ENCODE measurements at regions of chr2 and their contacts with region 1.

Region 1: GRCh38 chr2:160429248-160430000 is 64.2 kb downstream of the RBMS1 start:
- DNase-seq: no peak
- H3K4me3 Mint-ChIP-seq: no peak overlapping the region
- H3K27ac Mint-ChIP-seq: peak overlapping the region; percentile 64
- H3K4me1 Mint-ChIP-seq: peaks cover 79% of the 10 kb centered on the region
- H3K27me3 Mint-ChIP-seq: no peaks in the 10 kb centered on the region

Region 2: GRCh38 chr2:160411167-160411566 is 18.3 kb before region 1 on chr2:
- CTCF ChIA-PET with region 1: interaction called, 21 read pairs
- DNase-seq: peak; percentile 53
- H3K4me3 Mint-ChIP-seq: peak overlapping the region; percentile 57
- H3K27ac Mint-ChIP-seq: peak overlapping the region; percentile 93
- H3K4me1 Mint-ChIP-seq: peaks cover 72% of the 10 kb centered on the region
- H3K27me3 Mint-ChIP-seq: no peaks in the 10 kb centered on the region

Region 3: DNA sequence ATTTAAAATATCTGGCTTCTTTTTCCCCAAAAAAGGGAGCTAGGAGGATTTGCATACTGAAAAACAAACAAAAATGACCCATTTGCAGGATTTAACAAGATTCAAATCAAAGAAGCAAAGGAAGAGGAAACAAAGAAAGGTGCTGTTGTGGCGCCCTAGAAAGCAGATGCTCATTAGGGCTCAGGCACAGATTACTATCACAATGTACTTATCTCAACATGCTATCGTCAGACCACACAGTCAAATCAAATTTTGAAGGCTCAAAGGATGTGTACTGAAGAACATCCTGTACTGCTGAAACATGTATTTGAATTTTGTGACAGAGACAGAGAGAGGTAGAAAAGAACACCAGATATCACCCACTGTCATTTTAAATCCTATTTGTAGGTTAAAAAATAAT is 53.2 kb after region 1 on chr2:
- CTCF ChIA-PET with region 1: interaction called, 10 read pairs
- DNase-seq: peak; percentile 56
- H3K4me3 Mint-ChIP-seq: peak overlapping the region; percentile 59
- H3K27ac Mint-ChIP-seq: peak overlapping the region; percentile 95
- H3K4me1 Mint-ChIP-seq: peaks cover 81% of the 10 kb centered on the region
- H3K27me3 Mint-ChIP-seq: peaks cover 4% of the 10 kb centered on the region

Region 4: GRCh38 chr2:160510617-160511016 is 81.2 kb after region 1 on chr2:
- CTCF ChIA-PET with region 1: no interaction called
- DNase-seq: no peak
- H3K4me3 Mint-ChIP-seq: no peak overlapping the region
- H3K27ac Mint-ChIP-seq: no peak overlapping the region
- H3K4me1 Mint-ChIP-seq: peaks cover 19% of the 10 kb centered on the region
- H3K27me3 Mint-ChIP-seq: no peaks in the 10 kb centered on the region

Measured in activated naive CD4-positive, alpha-beta T cell treated with anti-CD3 and anti-CD28 coated beads, Interleukin-2, amount 10 ng/mL, durations not matched to agents 7 days and 5 days (primary cell).